ENCODE measurements at regions of chr15 and their contacts with region 1.

Region 1: DNA sequence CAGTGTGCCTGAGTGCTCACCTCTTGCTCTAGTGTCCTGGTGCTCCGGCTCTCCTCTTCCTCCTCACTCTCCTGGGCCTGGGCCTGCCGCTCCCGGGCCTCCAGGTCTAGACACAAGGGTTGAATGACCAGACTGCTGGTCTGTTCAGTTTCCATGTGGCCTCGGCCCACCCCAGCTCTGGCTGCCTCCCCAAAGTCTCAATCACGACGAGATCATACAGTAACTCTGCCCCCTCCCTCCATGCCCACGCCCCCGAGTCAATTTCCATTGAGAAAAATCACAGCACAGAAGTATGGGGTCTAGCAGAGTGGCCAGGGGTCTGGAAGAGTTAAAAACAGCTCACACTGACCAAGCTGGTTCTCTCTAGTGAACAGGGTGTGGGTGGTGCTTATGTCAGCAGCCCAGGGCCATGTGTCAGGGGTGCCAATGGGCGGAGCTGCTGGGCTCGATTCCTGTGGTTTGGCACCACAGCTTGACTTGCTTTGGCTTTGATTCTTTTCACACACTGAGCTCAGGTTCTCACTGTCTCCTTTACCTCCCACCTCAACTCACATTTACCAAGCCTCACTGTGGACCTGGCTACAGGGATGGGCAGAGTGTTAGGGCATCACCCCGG is 6.8 kb downstream of the C15orf62 start:
- DNase-seq: peak; percentile 89
- H3K4me3 ChIP-seq: no peak overlapping the region
- H3K27ac ChIP-seq: peak overlapping the region; percentile 79
- H3K4me1 ChIP-seq: peaks cover 21% of the 10 kb centered on the region
- H3K27me3 ChIP-seq: no peaks in the 10 kb centered on the region
- CTCF ChIP-seq: no peak

Region 2: DNA sequence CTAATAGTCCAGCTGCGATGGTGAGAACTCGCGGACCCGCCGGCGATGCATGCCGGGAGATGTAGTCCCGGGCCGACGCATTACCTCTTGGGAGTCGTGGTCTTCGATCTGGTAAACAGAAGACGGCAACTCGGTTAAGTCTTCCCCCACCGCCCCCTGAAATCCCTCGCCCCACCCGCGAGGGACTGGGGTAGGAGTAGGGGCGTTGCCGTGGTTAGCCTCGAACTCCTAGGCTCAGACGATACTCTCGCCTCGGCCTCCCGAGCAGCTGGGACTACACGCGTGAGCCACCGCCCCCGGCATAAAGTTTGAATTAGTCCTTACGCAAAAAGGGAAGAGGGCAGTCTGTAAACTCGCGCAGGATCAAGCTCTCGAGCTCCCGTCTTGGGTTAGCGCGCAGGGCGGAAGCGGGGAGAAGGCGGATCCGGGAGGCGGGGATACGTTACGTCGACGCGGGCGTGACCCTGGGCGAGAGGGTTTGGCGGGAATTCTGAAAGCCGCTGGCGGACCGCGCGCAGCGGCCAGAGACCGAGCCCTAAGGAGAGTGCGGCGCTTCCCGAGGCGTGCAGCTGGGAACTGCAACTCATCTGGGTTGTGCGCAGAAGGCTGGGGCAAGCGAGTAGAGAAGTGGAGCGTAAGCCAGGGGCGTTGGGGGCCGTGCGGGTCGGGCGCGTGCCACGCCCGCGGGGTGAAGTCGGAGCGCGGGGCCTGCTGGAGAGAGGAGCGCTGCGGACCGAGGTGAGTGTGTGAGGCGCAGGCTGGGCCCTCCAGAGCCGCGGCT is 81.8 kb before region 1 on chr15 and contains the start of gene RAD51:
- CTCF ChIA-PET with region 1: interaction called, 5 read pairs
- POLR2A ChIA-PET with region 1: interaction called, 8 read pairs
- intact Hi-C with region 1: loop called (anchors 2 kb)
- DNase-seq: peak; percentile 83 to 90
- H3K4me3 ChIP-seq: peak within 1 kb of the TSS; percentile 88
- H3K27ac ChIP-seq: peak within 1 kb of the TSS; percentile 78
- H3K4me1 ChIP-seq: peaks cover 19% of the 10 kb centered on the region
- H3K27me3 ChIP-seq: no peaks in the 10 kb centered on the region
- CTCF ChIP-seq: no peak
- total RNA-seq, gene RAD51: 19.8 and 22.5 TPM in 2 replicates

Region 3: DNA sequence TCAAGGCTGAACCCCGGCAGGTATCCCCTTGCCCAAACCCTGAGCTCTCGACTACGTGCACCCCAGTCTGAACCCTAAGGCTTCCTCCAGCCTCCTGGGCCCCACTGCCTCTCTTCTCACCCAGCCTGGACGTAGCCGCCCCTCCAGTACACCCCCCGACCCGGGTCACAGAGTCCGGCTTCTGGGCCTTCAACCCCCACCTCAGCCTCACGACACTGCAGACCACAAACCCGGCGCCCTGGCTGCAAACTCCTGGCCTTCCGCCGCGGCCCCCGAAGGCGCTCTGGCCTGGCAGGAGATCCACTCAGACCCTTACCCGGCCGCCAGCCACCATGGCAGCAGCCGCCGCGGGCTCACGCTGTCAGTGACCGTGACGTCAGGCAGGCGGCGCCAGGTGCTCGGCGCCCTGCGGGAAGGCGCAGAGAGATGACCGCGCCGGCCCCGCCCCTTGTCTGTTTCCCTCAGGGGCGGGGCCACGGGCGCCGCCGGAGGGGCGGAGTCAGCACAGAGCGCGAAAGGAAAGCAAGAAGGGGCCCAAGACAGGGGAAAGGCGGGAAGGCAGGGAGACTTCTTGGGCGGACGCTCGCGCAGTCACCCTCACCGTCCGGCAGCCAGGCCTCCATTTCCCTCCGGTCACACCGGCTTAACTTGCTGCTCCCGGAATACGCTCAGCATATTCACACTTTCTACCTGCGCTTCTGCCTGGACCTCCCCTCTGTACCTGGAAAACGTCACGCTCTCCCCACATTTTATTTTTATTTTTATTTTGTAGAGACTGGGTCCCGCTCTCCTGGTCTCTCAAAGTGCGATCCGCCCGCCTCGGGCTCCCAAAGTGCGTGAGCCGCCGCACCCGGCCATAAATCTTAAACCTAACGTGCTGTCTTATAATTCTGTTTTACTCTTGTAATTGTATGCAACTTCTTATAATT is 21.5 kb before region 1 on chr15 and contains the start of gene RMDN3:
- CTCF ChIA-PET with region 1: no interaction called
- POLR2A ChIA-PET with region 1: interaction called, 4 read pairs
- intact Hi-C with region 1: loop called (anchors 2 kb)
- DNase-seq: peak; percentile 73 to 92
- H3K4me3 ChIP-seq: peak within 1 kb of the TSS; percentile 93
- H3K27ac ChIP-seq: peak within 1 kb of the TSS; percentile 59
- H3K4me1 ChIP-seq: peaks cover 12% of the 10 kb centered on the region; the same call in 1 of the 2 replicates
- H3K27me3 ChIP-seq: no peaks in the 10 kb centered on the region
- CTCF ChIP-seq: no peak
- total RNA-seq, gene RMDN3: 15.7 and 19.8 TPM in 2 replicates

Region 4: DNA sequence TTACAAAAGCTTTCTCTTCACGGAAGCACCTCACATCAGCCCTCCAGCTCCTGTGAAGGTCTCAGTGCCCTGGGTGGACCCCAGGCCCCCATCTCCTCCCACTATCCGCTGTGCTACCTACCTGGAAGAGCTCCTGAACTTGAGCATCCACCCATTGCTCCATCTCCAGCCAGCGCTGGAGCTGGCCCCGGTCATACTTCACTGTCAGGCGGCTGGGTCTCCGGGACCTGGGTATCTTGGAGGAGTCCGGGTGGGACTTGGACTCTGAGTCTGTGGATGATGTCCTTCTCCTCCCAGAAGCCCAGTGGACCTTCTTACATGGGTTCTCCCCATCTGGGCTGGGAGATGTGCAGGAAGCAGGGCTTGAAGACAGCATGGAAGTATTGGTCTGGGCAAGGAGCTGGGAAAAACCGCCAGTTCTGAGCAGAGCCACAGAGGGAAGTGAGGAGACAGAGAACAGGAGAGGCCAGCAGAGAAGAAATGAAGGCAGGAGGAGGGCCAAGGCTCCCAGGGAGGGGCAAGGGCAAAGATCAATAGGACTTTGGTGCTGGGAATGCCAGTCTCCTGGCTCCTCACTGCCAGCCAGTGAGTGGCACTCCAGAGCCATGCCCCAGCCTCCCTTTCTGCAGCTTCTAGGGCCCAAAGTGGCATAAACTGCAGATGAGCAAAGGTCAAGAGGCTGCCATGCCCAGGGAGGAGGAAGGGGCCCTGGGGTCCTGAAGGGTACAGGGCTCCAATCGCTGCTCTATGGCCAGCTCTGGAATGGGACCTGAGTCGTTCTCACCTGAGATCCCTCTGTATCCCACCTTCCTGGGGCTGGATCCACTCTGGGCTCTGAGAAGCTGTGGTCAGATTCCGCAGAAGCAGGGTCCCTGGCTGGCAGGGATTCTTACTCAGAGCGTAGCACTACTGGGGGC is 51.9 kb after region 1 on chr15 and contains the start of gene PPP1R14D:
- CTCF ChIA-PET with region 1: no interaction called
- POLR2A ChIA-PET with region 1: no interaction called
- intact Hi-C with region 1: no loop called
- DNase-seq: no peak
- H3K4me3 ChIP-seq: no peak within 1 kb of the TSS
- H3K27ac ChIP-seq: peak within 1 kb of the TSS; percentile 100; the same call in 1 of the 2 replicates
- H3K4me1 ChIP-seq: peaks cover 42% of the 10 kb centered on the region
- H3K27me3 ChIP-seq: no peaks in the 10 kb centered on the region
- CTCF ChIP-seq: no peak
- total RNA-seq, gene PPP1R14D: 0.55 and 0.65 TPM in 2 replicates

Region 5: GRCh38 chr15:41323611-41324010 is 547.0 kb after region 1 on chr15:
- CTCF ChIA-PET with region 1: no interaction called
- POLR2A ChIA-PET with region 1: interaction called, 10 read pairs
- intact Hi-C with region 1: no loop called
- DNase-seq: no peak
- H3K4me3 ChIP-seq: no peak overlapping the region
- H3K27ac ChIP-seq: no peak overlapping the region
- H3K4me1 ChIP-seq: no peaks in the 10 kb centered on the region
- H3K27me3 ChIP-seq: no peaks in the 10 kb centered on the region
- CTCF ChIP-seq: no peak